ENCODE measurements at regions of chr3 and their contacts with region 1.

Region 1: GRCh38 chr3:96331341-96331740 is 483.1 kb upstream of the EPHA6 start:
- DNase-seq: peak; percentile 59
- ATAC-seq: peak; percentile 75
- H3K4me3 ChIP-seq: no peak overlapping the region
- H3K27ac ChIP-seq: no peak overlapping the region
- H3K4me1 ChIP-seq: peaks cover 6% of the 10 kb centered on the region; the same call in 1 of the 2 replicates
- H3K27me3 ChIP-seq: no peaks in the 10 kb centered on the region
- CTCF ChIP-seq: peak; percentile 75

Region 2: GRCh38 chr3:95521395-95521794 is 809.9 kb before region 1 on chr3:
- CTCF ChIA-PET with region 1: no interaction called
- POLR2A ChIA-PET with region 1: no interaction called
- intact Hi-C with region 1: loop called (anchors 2 kb)
- DNase-seq: peak; percentile 12
- ATAC-seq: no peak
- H3K4me3 ChIP-seq: no peak overlapping the region
- H3K27ac ChIP-seq: no peak overlapping the region
- H3K4me1 ChIP-seq: no peaks in the 10 kb centered on the region
- H3K27me3 ChIP-seq: no peaks in the 10 kb centered on the region
- CTCF ChIP-seq: peak; percentile 41; the same call in 1 of the 2 replicates

Region 3: GRCh38 chr3:96480881-96481280 is 149.5 kb after region 1 on chr3:
- CTCF ChIA-PET with region 1: interaction called, 3 read pairs
- POLR2A ChIA-PET with region 1: interaction called, 5 read pairs
- intact Hi-C with region 1: loop called (anchors 5 kb)
- DNase-seq: no peak
- ATAC-seq: no peak
- H3K4me3 ChIP-seq: no peak overlapping the region
- H3K27ac ChIP-seq: no peak overlapping the region
- H3K4me1 ChIP-seq: peaks cover 20% of the 10 kb centered on the region
- H3K27me3 ChIP-seq: no peaks in the 10 kb centered on the region
- CTCF ChIP-seq: no peak

Region 4: DNA sequence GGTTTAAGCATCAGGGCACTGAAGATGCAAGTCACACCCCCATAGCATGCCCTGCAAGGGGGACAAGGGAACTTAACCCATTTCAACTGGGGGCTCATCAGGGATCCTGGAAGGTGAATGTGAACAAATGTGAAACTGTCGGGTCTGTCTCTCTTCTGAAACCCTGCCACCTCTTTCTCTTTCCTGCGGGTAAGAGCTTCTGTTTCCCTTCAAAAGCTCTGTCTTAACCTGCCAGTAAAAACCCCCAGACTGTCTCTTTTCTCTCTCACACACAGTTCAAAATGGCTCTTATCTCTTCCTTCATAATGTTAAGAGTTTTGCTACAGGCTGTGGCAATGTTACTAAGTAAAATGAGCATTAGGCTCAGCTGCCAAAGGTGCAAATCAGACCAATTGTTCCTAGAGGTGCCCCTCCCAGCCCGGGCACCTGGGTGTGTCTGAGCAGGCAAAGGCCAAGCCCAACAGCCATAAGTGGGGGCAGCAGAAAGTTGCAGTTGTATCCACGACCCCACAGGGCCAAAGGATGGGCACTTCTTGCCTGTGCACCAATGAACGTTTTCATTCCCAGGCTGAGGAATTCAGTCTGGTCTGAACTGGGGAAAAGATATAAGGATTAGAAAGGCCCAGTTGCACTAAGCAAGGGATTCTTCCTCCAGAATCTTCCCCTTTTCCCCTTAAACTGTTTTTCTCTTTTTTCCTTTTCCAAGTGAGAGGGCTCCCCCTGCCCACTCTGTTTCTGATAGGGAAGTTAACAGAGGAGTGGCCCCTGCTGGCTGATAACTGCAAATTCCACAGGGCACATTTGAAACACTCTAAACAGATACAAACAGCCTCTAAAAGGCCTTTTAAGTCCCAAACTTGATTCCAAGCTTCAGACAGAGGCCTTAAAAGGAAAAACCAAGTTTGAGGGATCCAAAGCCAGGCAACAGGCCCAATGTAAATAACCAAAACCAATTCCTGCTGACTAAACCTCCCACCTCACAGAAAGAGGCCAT is 369.3 kb after region 1 on chr3:
- CTCF ChIA-PET with region 1: no interaction called
- POLR2A ChIA-PET with region 1: interaction called, 3 read pairs
- intact Hi-C with region 1: loop called (anchors 1 kb)
- DNase-seq: peak; percentile 31
- ATAC-seq: no peak; the same call in 1 of the 2 replicates
- H3K4me3 ChIP-seq: no peak overlapping the region
- H3K27ac ChIP-seq: no peak overlapping the region
- H3K4me1 ChIP-seq: peaks cover 14% of the 10 kb centered on the region
- H3K27me3 ChIP-seq: no peaks in the 10 kb centered on the region
- CTCF ChIP-seq: peak; percentile 70

Region 5: GRCh38 chr3:96756516-96756915 is 425.2 kb after region 1 on chr3:
- CTCF ChIA-PET with region 1: interaction called, 9 read pairs
- POLR2A ChIA-PET with region 1: no interaction called
- intact Hi-C with region 1: loop called (anchors 1 kb)
- DNase-seq: no peak
- ATAC-seq: no peak
- H3K4me3 ChIP-seq: no peak overlapping the region
- H3K27ac ChIP-seq: no peak overlapping the region
- H3K4me1 ChIP-seq: peaks cover 5% of the 10 kb centered on the region; the same call in 1 of the 2 replicates
- H3K27me3 ChIP-seq: no peaks in the 10 kb centered on the region
- CTCF ChIP-seq: no peak